HepG2 (cell line): ENCODE measurements at regions of chr5 and their contacts with region 1.

Region 1: GRCh38 chr5:11555171-11555570 is 349.1 kb downstream of the CTNND2 start:
- DNase-seq: peak; percentile 18
- ATAC-seq: peak; percentile 56
- H3K4me3 ChIP-seq: 0 out of 6 replicates have a peak overlapping the region, but pooled peaks of 1 of the 3 experiments have one; percentile 4
- H3K27ac ChIP-seq: no peak overlapping the region
- H3K4me1 ChIP-seq: peaks cover 9% of the 10 kb centered on the region
- H3K27me3 ChIP-seq: no peaks in the 10 kb centered on the region
- CTCF ChIP-seq: no peak
- EP300 ChIP-seq: 0 out of 4 replicates have a peak, but pooled peaks of 1 of the 2 experiments have one; percentile 11
- POLR2A ChIP-seq: no peak
- RAD21 ChIP-seq: no peak

Region 2: DNA sequence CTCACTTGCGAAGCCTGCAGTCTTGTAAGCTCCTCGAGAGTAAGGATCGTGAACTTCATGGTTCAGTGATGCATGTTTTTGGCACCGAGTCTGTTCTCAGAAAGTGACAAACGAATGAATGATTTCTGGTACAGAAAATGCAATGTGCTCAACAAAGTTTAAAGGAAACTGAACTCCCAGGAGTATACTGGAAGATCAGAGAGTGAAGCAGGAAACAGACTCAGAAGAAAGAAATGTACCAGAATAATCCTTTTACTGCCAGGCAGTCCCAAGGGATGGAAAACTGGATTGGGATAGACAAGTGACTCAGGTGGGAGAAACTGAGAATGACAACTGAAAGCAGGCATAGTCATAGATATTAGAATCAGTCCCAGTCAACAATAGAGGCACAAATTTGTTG is 71.5 kb before region 1 on chr5:
- CTCF ChIA-PET with region 1: no interaction called
- POLR2A ChIA-PET with region 1: no interaction called
- in situ Hi-C with region 1: no loop called
- intact Hi-C with region 1: no loop called
- DNase-seq: no peak
- ATAC-seq: no peak
- H3K4me3 ChIP-seq: no peak overlapping the region
- H3K27ac ChIP-seq: no peak overlapping the region
- H3K4me1 ChIP-seq: no peaks in the 10 kb centered on the region
- H3K27me3 ChIP-seq: 0 out of 5 replicates have a peak, but pooled peaks cover 0 to 3% of the 10 kb centered on the region in 2 experiments
- CTCF ChIP-seq: no peak
- EP300 ChIP-seq: no peak
- POLR2A ChIP-seq: no peak
- RAD21 ChIP-seq: no peak

Region 3: DNA sequence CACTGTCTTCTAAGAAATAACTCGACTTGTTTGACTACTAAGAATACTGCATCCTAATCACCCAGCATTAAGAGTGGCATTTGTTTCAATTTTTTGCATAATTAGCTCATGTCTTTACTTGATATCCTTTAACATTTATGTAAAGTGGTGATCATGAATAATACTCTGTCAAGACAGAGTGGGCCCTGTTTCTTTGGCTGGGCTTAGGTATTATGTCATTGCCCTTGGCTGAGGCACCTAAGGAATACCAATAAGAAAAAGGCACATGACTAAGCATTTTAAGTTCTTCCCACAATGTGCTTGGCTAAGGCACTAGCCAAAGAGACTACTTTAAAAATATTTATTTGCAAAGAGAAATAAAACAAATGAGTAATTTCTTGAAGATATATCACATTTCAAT is 41.0 kb after region 1 on chr5:
- CTCF ChIA-PET with region 1: no interaction called
- POLR2A ChIA-PET with region 1: no interaction called
- in situ Hi-C with region 1: no loop called
- intact Hi-C with region 1: loop called (anchors 5 kb)
- DNase-seq: no peak
- ATAC-seq: peak; percentile 8; the same call in 2 of the 3 replicates
- H3K4me3 ChIP-seq: no peak overlapping the region
- H3K27ac ChIP-seq: peak overlapping the region; percentile 82
- H3K4me1 ChIP-seq: peaks cover 83% of the 10 kb centered on the region
- H3K27me3 ChIP-seq: no peaks in the 10 kb centered on the region
- CTCF ChIP-seq: no peak
- EP300 ChIP-seq: no peak
- POLR2A ChIP-seq: no peak
- RAD21 ChIP-seq: no peak